ENCODE measurements at regions of chr12 and their contacts with region 1.

Region 1: GRCh38 chr12:14384783-14385638 is 19.5 kb downstream of the ATF7IP start:
- DNase-seq: peak; percentile 71
- ATAC-seq: peak; percentile 73
- H3K4me3 ChIP-seq: peak overlapping the region in 2 of 5 experiments; percentile 15 to 34
- H3K4me3 Mint-ChIP-seq: peak overlapping the region; percentile 60
- H3K27ac ChIP-seq: peak overlapping the region; percentile 21 to 54
- H3K27ac Mint-ChIP-seq: peak overlapping the region; percentile 82
- H3K4me1 ChIP-seq: peaks cover 29 to 37% of the 10 kb centered on the region in 2 donors
- H3K4me1 Mint-ChIP-seq: peaks cover 50% of the 10 kb centered on the region
- H3K27me3 ChIP-seq: no peaks in the 10 kb centered on the region
- H3K27me3 Mint-ChIP-seq: no peaks in the 10 kb centered on the region
- CTCF ChIP-seq: no peak

Region 2: DNA sequence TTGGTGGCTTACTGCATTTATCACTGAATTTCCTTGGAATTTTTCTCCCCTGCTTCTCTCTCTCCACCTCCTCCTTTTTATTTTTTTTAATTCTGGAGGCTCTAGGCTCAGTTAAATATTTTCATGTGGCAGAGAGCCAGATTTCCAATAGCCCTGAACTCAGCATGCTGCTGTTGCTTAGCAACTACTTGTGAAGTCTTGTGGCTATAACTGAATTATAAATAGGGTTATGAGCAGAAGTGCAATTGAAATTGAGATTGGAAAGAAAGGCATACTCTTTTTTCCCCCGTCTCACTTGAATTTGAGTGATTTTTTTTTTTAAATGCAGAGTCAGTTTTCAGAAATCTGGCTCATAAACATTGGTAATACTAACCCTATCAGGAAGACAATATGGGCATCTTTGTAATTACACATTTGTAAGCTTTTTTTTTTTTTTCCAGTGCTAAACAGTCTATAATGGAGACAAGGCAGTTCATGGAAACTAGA is 18.7 kb after region 1 on chr12:
- CTCF ChIA-PET with region 1: no interaction called
- POLR2A ChIA-PET with region 1: interaction called, 3 read pairs
- intact Hi-C with region 1: loop called (anchors 2 kb)
- DNase-seq: peak; percentile 68
- ATAC-seq: peak; percentile 65
- H3K4me3 ChIP-seq: no peak overlapping the region
- H3K4me3 Mint-ChIP-seq: peak overlapping the region; percentile 62
- H3K27ac ChIP-seq: peak overlapping the region; percentile 23 to 69
- H3K27ac Mint-ChIP-seq: peak overlapping the region; percentile 74
- H3K4me1 ChIP-seq: peaks cover 21 to 52% of the 10 kb centered on the region in 2 donors
- H3K4me1 Mint-ChIP-seq: peaks cover 61% of the 10 kb centered on the region
- H3K27me3 ChIP-seq: no peaks in the 10 kb centered on the region
- H3K27me3 Mint-ChIP-seq: no peaks in the 10 kb centered on the region
- CTCF ChIP-seq: no peak

Region 3: DNA sequence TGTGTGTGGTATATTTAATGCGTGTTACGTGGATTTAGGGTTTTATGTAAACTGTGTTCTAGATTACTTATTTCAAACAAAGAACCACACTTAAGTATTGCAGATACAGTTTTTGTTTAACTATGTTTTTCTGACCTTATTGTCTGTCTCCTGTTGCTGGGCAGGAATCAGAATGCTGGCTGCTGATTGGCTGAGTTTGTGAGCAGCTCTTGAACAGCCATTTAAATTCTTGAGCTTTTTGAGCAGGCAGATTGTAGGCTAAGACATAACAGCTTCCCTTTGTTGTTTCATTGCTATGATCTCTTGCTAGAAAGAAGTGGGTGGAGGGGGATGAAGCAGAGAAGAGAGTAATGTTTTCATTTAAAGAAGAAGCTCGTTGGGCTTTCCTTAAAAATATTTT is 32.7 kb after region 1 on chr12:
- CTCF ChIA-PET with region 1: interaction called, 6 read pairs
- POLR2A ChIA-PET with region 1: no interaction called
- intact Hi-C with region 1: loop called (anchors 2 kb)
- DNase-seq: peak; percentile 67
- ATAC-seq: peak; percentile 48
- H3K4me3 ChIP-seq: no peak overlapping the region
- H3K4me3 Mint-ChIP-seq: peak overlapping the region; percentile 75
- H3K27ac ChIP-seq: no peak overlapping the region
- H3K27ac Mint-ChIP-seq: peak overlapping the region; percentile 62
- H3K4me1 ChIP-seq: peaks cover 21 to 42% of the 10 kb centered on the region in 2 donors
- H3K4me1 Mint-ChIP-seq: peaks cover 53% of the 10 kb centered on the region
- H3K27me3 ChIP-seq: no peaks in the 10 kb centered on the region
- H3K27me3 Mint-ChIP-seq: no peaks in the 10 kb centered on the region
- CTCF ChIP-seq: no peak